Left cardiac atrium (tissue), 4 donors: ENCODE measurements at regions of chrX and their contacts with region 1.

Region 1: GRCh38 chrX:132226169-132226568 is 6.9 kb upstream of the RAP2C start:
- DNase-seq: no peak
- ATAC-seq: no peak

Region 2: GRCh38 chrX:131778269-131779218 is 447.6 kb before region 1 on chrX:
- intact Hi-C with region 1: no loop called
- DNase-seq: peak; percentile 62
- ATAC-seq: peak in 1 of 2 donors; percentile 91

Region 3: DNA sequence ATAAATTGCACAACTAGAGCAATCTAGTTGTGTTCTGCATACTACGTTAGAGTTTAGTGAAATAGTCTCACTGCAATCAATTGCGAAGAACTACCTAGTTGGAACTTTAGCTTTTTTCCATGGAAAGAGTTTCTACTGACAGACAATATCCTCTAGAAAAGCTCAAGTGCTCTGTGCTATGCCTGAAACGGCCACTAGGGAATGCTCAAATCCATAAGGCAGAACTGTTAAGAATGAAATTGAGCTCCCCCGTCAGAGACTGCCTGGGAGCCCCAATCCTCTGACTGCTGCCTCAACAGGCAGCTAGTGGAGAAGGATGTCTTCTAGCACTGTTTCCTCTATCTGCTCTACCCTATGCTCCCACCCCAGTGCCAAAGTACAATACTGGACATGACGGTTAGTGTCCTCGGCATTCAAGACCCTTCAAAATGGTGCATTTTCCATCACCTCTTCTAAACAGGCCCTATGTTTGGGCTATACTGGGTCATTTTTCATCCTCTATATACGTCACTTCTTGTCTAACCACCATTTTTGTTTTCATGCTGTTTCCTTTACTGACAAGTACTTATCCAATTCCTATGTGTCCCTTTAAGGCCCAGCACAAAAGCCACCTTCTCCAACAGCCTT is 133.6 kb before region 1 on chrX:
- intact Hi-C with region 1: loop called in 1 of 2 experiments (anchors 10 kb)
- DNase-seq: peak; percentile 43
- ATAC-seq: peak; percentile 56 to 89

Region 4: GRCh38 chrX:132401935-132402334 is 175.8 kb after region 1 on chrX:
- intact Hi-C with region 1: no loop called
- DNase-seq: no peak
- ATAC-seq: no peak

Region 5: GRCh38 chrX:132831336-132831973 is 605.3 kb after region 1 on chrX:
- intact Hi-C with region 1: no loop called
- DNase-seq: no peak
- ATAC-seq: no peak